Heart right ventricle (tissue), 16 donors: ENCODE measurements at regions of chr17 and their contacts with region 1.

Region 1: GRCh38 chr17:9291912-9292560 is 270.7 kb downstream of the NTN1 start:
- DNase-seq: peak; percentile 36 to 45
- ATAC-seq: peak; percentile 81 to 96 (median 88)
- H3K4me3 ChIP-seq: no peak overlapping the region
- H3K27ac ChIP-seq: peak overlapping the region in 2 of 10 donors; percentile 21 to 32
- H3K4me1 ChIP-seq: peaks cover 0 to 20% (median 5%) of the 10 kb centered on the region in 9 donors
- H3K27me3 ChIP-seq: no peaks in the 10 kb centered on the region
- CTCF ChIP-seq: peak; percentile 62 to 87 (median 79)

Region 2: GRCh38 chr17:8991514-8992285 is 300.3 kb before region 1 on chr17:
- intact Hi-C with region 1: loop called in 9 of 10 experiments (anchors 1 to 10 kb)
- DNase-seq: peak; percentile 25 to 69
- ATAC-seq: peak in 7 of 8 donors; percentile 46 to 75 (median 69)
- H3K4me3 ChIP-seq: no peak overlapping the region
- H3K27ac ChIP-seq: no peak overlapping the region
- H3K4me1 ChIP-seq: no peaks in the 10 kb centered on the region
- H3K27me3 ChIP-seq: peaks cover 0 to 19% (median 3%) of the 10 kb centered on the region in 7 donors
- CTCF ChIP-seq: peak; percentile 52 to 87 (median 79)

Region 3: GRCh38 chr17:8997994-8998628 is 293.9 kb before region 1 on chr17:
- intact Hi-C with region 1: loop called in 9 of 10 experiments (anchors 1 to 10 kb)
- DNase-seq: peak in 1 of 2 donors; percentile 62
- ATAC-seq: peak in 5 of 8 donors; percentile 52 to 65 (median 59)
- H3K4me3 ChIP-seq: no peak overlapping the region
- H3K27ac ChIP-seq: no peak overlapping the region
- H3K4me1 ChIP-seq: peaks cover 0 to 10% (median 5%) of the 10 kb centered on the region in 9 donors
- H3K27me3 ChIP-seq: peaks cover 0 to 47% (median 16%) of the 10 kb centered on the region in 7 donors
- CTCF ChIP-seq: peak; percentile 62 to 97 (median 78)

Region 4: GRCh38 chr17:9138101-9138717 is 153.8 kb before region 1 on chr17:
- intact Hi-C with region 1: no loop called
- DNase-seq: peak; percentile 62 to 75
- ATAC-seq: peak; percentile 85 to 94 (median 90)
- H3K4me3 ChIP-seq: no peak overlapping the region
- H3K27ac ChIP-seq: no peak overlapping the region
- H3K4me1 ChIP-seq: peaks cover 0 to 11% (median 0%) of the 10 kb centered on the region in 9 donors
- H3K27me3 ChIP-seq: no peaks in the 10 kb centered on the region
- CTCF ChIP-seq: no peak

Region 5: GRCh38 chr17:9177212-9177611 is 114.8 kb before region 1 on chr17:
- intact Hi-C with region 1: loop called in 1 of 10 experiments (anchors 10 kb)
- DNase-seq: peak; percentile 13 to 49
- ATAC-seq: peak in 7 of 8 donors; percentile 21 to 59 (median 41)
- H3K4me3 ChIP-seq: no peak overlapping the region
- H3K27ac ChIP-seq: no peak overlapping the region
- H3K4me1 ChIP-seq: peaks cover 0 to 40% (median 11%) of the 10 kb centered on the region in 9 donors
- H3K27me3 ChIP-seq: no peaks in the 10 kb centered on the region
- CTCF ChIP-seq: no peak

Region 6: GRCh38 chr17:9233761-9234447 is 58.1 kb before region 1 on chr17:
- intact Hi-C with region 1: no loop called
- DNase-seq: no peak
- ATAC-seq: no peak
- H3K4me3 ChIP-seq: no peak overlapping the region
- H3K27ac ChIP-seq: no peak overlapping the region
- H3K4me1 ChIP-seq: peaks cover 0 to 5% (median 2%) of the 10 kb centered on the region in 9 donors
- H3K27me3 ChIP-seq: peaks cover 0 to 28% (median 0%) of the 10 kb centered on the region in 7 donors
- CTCF ChIP-seq: no peak

Region 7: GRCh38 chr17:9350080-9350479 is 58.0 kb after region 1 on chr17:
- intact Hi-C with region 1: loop called in 1 of 10 experiments (anchors 10 kb)
- DNase-seq: no peak
- ATAC-seq: no peak
- H3K4me3 ChIP-seq: no peak overlapping the region
- H3K27ac ChIP-seq: no peak overlapping the region
- H3K4me1 ChIP-seq: no peaks in the 10 kb centered on the region
- H3K27me3 ChIP-seq: no peaks in the 10 kb centered on the region
- CTCF ChIP-seq: no peak

Region 8: GRCh38 chr17:9371019-9371418 is 79.0 kb after region 1 on chr17:
- intact Hi-C with region 1: no loop called
- DNase-seq: peak in 1 of 2 donors; percentile 31
- ATAC-seq: peak; percentile 56 to 93 (median 82)
- H3K4me3 ChIP-seq: no peak overlapping the region
- H3K27ac ChIP-seq: peak overlapping the region in 9 of 10 donors; percentile 2 to 80 (median 69)
- H3K4me1 ChIP-seq: peaks cover 6 to 55% (median 34%) of the 10 kb centered on the region in 9 donors
- H3K27me3 ChIP-seq: no peaks in the 10 kb centered on the region
- CTCF ChIP-seq: no peak

Region 9: GRCh38 chr17:9512323-9513168 is 220.5 kb after region 1 on chr17:
- intact Hi-C with region 1: loop called in 2 of 10 experiments (anchors 10 kb)
- DNase-seq: no peak
- ATAC-seq: no peak
- H3K4me3 ChIP-seq: no peak overlapping the region
- H3K27ac ChIP-seq: no peak overlapping the region
- H3K4me1 ChIP-seq: peaks cover 0 to 3% (median 0%) of the 10 kb centered on the region in 9 donors
- H3K27me3 ChIP-seq: no peaks in the 10 kb centered on the region
- CTCF ChIP-seq: no peak

Region 10: GRCh38 chr17:9522074-9522473 is 230.0 kb after region 1 on chr17:
- intact Hi-C with region 1: loop called in 4 of 10 experiments (anchors 10 kb)
- DNase-seq: peak in 1 of 2 donors; percentile 23
- ATAC-seq: peak in 6 of 8 donors; percentile 64 to 76 (median 72)
- H3K4me3 ChIP-seq: no peak overlapping the region
- H3K27ac ChIP-seq: no peak overlapping the region
- H3K4me1 ChIP-seq: peaks cover 0 to 22% (median 6%) of the 10 kb centered on the region in 9 donors
- H3K27me3 ChIP-seq: no peaks in the 10 kb centered on the region
- CTCF ChIP-seq: peak in 7 of 9 donors; percentile 35 to 68 (median 62)